ENCODE measurements at regions of chr15 and their contacts with region 1.

Region 1: DNA sequence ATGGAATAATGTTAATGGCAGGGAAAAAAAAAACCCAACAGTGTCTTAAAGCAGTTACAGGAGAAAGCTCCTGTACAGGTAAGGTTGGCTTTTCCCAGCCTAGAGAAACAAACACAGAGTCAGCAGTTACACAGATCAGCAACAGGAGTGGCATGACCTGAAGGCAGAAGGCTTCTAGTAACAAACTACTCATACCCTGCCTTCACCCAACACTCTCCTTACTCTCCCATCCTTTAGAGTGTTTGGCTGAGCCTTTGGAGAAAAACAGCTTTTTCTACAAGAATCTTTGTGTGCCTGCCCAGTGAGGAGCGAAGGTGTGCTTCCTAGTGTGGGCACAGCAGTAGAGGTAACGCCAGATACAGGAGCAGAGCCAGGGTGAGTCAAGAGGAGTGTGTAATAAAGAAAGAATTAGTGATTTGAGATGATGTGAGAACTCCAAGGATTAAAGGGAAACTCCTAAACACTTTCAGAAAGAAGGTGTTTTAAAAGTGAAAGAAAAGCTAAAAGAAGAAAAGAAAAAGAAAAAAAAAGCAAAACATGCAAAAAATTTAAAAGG is 152.7 kb downstream of the POLR2M start:
- DNase-seq: no peak
- H3K4me3 ChIP-seq: no peak overlapping the region
- H3K27ac ChIP-seq: no peak overlapping the region
- H3K4me1 ChIP-seq: no peaks in the 10 kb centered on the region
- H3K27me3 ChIP-seq: no peaks in the 10 kb centered on the region
- CTCF ChIP-seq: no peak
- POLR2A ChIP-seq: no peak

Region 2: GRCh38 chr15:57751177-57751800 is 107.9 kb before region 1 on chr15:
- intact Hi-C with region 1: loop called in 1 of 2 experiments (anchors 5 kb)
- DNase-seq: peak in 1 of 7 donors; percentile 26
- H3K4me3 ChIP-seq: no peak overlapping the region
- H3K27ac ChIP-seq: no peak overlapping the region
- H3K4me1 ChIP-seq: no peaks in the 10 kb centered on the region
- H3K27me3 ChIP-seq: no peaks in the 10 kb centered on the region
- CTCF ChIP-seq: peak in 5 of 6 experiments; percentile 23 to 54 (median 40)
- POLR2A ChIP-seq: no peak

Measured in adrenal gland (tissue), 19 donors.